Body of pancreas (tissue), 4 donors: ENCODE measurements at regions of chr2 and their contacts with region 1.

Region 1: GRCh38 chr2:69724540-69725159 is 17.3 kb upstream of the ANXA4 start:
- DNase-seq: peak; percentile 88 to 93 (median 90)
- ATAC-seq: peak; percentile 93
- H3K4me3 ChIP-seq: no peak overlapping the region
- H3K27ac ChIP-seq: peak overlapping the region in 1 of 4 donors; percentile 20
- H3K4me1 ChIP-seq: peaks cover 8% of the 10 kb centered on the region
- H3K27me3 ChIP-seq: no peaks in the 10 kb centered on the region
- CTCF ChIP-seq: peak; percentile 84 to 98 (median 96)
- POLR2A ChIP-seq: no peak

Region 2: DNA sequence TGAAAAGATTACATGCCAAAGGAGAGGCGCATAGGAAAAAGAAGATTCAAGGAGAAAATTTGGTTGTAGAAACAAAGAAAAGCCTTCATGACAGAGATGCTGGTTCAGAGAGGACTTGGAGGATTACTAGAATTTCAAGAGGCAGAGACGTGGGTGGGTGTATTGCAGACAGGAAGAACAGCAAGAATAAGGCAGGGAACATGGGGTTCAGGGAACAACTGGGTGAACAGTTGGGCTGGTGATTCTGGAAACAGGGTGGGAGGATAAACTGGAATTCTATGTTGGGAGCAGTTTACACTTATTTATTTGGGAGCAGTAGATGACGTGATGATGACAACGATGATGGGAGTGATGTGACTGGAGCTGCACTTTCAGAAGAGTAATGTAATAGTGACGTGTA is 86.4 kb after region 1 on chr2:
- intact Hi-C with region 1: loop called (anchors 5 kb)
- DNase-seq: no peak
- ATAC-seq: no peak
- H3K4me3 ChIP-seq: no peak overlapping the region
- H3K27ac ChIP-seq: peak overlapping the region in 1 of 4 donors; percentile 8
- H3K4me1 ChIP-seq: peaks cover 23% of the 10 kb centered on the region
- H3K27me3 ChIP-seq: no peaks in the 10 kb centered on the region
- CTCF ChIP-seq: no peak
- POLR2A ChIP-seq: no peak